ENCODE measurements at regions of chr6 and their contacts with region 1.

Region 1: DNA sequence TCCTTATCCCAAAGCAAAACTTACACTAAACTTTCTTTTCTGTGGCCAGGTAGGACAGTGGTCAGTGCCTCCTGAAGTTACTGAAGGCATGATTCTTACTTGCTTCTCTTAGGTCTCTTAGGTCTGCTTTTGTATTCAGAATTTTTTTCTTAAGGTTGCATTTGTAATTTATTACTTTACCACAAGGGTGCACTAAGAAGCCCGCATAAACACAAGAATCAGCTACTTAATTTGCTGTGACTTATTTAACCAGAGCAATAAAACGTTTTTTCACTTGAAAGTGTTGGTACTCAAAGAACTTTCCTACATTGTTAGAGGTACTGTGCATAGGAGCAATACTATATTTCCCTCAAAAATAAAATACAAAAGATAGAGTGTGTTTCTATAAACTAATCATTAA is 75.4 kb upstream of the LAMA2 start:
- DNase-seq: peak; percentile 60
- ATAC-seq: peak; percentile 59
- H3K4me3 ChIP-seq: no peak overlapping the region
- H3K27ac ChIP-seq: no peak overlapping the region
- H3K4me1 ChIP-seq: peaks cover 2% of the 10 kb centered on the region
- H3K27me3 ChIP-seq: peaks cover 2% of the 10 kb centered on the region; the same call in 1 of the 2 replicates
- CTCF ChIP-seq: peak; percentile 61
- POLR2A ChIP-seq: no peak
- RAD21 ChIP-seq: peak; percentile 69

Region 2: GRCh38 chr6:127403636-127404035 is 1403.9 kb before region 1 on chr6:
- CTCF ChIA-PET with region 1: no interaction called
- POLR2A ChIA-PET with region 1: no interaction called
- dilution Hi-C with region 1: no loop called
- in situ Hi-C with region 1: no loop called
- intact Hi-C with region 1: no loop called
- DNase-seq: no peak
- ATAC-seq: no peak
- H3K4me3 ChIP-seq: no peak overlapping the region
- H3K27ac ChIP-seq: no peak overlapping the region
- H3K4me1 ChIP-seq: 0 out of 2 replicates have a peak, but pooled peaks cover 2% of the 10 kb centered on the region
- H3K27me3 ChIP-seq: no peaks in the 10 kb centered on the region
- CTCF ChIP-seq: no peak
- POLR2A ChIP-seq: no peak
- RAD21 ChIP-seq: no peak

Region 3: DNA sequence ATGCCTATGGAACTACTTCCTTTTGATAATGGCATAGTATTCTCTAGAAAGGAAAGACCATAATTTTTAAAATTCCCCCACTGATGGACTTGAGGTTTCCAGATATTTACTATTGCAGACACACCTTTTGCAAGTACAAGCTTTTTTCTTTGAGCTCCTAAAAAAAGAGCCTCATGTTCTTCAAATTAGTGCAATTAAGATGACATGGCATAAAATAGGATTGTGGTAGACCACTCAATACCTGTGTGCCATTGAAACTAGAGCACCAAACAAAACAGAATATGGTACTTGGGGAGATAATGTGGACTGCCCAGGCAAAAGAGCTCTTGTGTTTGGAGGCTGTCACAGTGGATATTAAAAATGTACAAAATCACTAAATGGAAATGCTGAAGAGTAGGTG is 56.4 kb after region 1 on chr6:
- CTCF ChIA-PET with region 1: no interaction called
- POLR2A ChIA-PET with region 1: no interaction called
- dilution Hi-C with region 1: no loop called
- in situ Hi-C with region 1: no loop called
- intact Hi-C with region 1: no loop called
- DNase-seq: no peak
- ATAC-seq: no peak
- H3K4me3 ChIP-seq: no peak overlapping the region
- H3K27ac ChIP-seq: no peak overlapping the region
- H3K4me1 ChIP-seq: no peaks in the 10 kb centered on the region
- H3K27me3 ChIP-seq: no peaks in the 10 kb centered on the region
- CTCF ChIP-seq: no peak
- POLR2A ChIP-seq: no peak
- RAD21 ChIP-seq: no peak

Region 4: DNA sequence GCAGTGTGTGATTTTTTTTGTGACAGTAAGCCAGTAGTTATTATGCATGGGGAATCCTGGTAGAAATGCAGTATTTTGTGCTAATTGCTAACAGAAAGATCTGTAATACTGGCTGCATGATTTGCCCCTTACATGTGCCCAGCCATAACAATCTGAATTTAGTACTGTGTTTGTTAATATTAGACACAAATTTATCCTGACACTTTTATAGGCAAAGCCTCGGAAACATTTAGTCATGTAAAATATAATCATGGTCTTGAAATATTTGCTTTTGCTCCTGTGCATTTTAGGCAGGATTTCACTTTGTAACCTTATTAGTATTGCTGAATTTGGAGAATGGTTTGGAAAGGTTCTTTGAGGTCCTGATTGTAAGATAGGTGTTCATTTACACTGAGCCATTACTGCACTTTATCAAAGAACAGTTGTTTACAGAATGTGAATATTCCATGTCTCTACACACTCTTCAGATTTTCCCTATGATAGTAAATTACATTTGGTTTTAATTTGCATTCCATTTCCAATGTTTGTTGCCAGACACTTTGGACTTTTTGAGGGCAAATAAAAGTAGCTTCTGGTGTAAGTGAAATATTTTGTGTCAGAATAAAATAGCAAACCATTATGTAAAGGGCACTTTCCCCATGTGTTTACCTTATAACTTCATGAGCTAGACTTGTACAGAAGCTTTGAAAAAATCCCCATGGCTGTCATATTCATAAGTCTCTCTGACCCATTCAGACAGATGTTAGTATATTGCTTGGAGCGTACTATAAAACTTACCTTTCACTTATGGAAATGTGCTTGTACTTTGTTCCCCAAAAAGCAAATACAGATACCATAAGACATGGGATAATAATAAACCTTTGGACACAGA is 552.5 kb after region 1 on chr6:
- CTCF ChIA-PET with region 1: no interaction called
- POLR2A ChIA-PET with region 1: no interaction called
- dilution Hi-C with region 1: no loop called
- in situ Hi-C with region 1: loop called (anchors 10 kb)
- intact Hi-C with region 1: no loop called
- DNase-seq: no peak
- ATAC-seq: no peak
- H3K4me3 ChIP-seq: no peak overlapping the region
- H3K27ac ChIP-seq: no peak overlapping the region
- H3K4me1 ChIP-seq: no peaks in the 10 kb centered on the region
- H3K27me3 ChIP-seq: no peaks in the 10 kb centered on the region
- CTCF ChIP-seq: no peak
- POLR2A ChIP-seq: no peak
- RAD21 ChIP-seq: no peak